MCF 10A (cell line): ENCODE measurements at regions of chr12 and their contacts with region 1.

Region 1: GRCh38 chr12:117850048-117850447 is 118.7 kb downstream of the KSR2 start:
- DNase-seq: peak; percentile 77
- H3K4me3 Mint-ChIP-seq: no peak overlapping the region
- H3K27ac Mint-ChIP-seq: no peak overlapping the region
- H3K4me1 Mint-ChIP-seq: peaks cover 4% of the 10 kb centered on the region
- H3K27me3 Mint-ChIP-seq: peaks cover 44% of the 10 kb centered on the region
- CTCF ChIP-seq: peak; percentile 77

Region 2: GRCh38 chr12:117025481-117026151 is 824.4 kb before region 1 on chr12:
- CTCF ChIA-PET with region 1: interaction called, 3 read pairs
- POLR2A ChIA-PET with region 1: no interaction called
- intact Hi-C with region 1: loop called (anchors 5 kb)
- DNase-seq: peak; percentile 70
- H3K4me3 Mint-ChIP-seq: no peak overlapping the region
- H3K27ac Mint-ChIP-seq: no peak overlapping the region
- H3K4me1 Mint-ChIP-seq: no peaks in the 10 kb centered on the region
- H3K27me3 Mint-ChIP-seq: no peaks in the 10 kb centered on the region
- CTCF ChIP-seq: peak; percentile 73

Region 3: DNA sequence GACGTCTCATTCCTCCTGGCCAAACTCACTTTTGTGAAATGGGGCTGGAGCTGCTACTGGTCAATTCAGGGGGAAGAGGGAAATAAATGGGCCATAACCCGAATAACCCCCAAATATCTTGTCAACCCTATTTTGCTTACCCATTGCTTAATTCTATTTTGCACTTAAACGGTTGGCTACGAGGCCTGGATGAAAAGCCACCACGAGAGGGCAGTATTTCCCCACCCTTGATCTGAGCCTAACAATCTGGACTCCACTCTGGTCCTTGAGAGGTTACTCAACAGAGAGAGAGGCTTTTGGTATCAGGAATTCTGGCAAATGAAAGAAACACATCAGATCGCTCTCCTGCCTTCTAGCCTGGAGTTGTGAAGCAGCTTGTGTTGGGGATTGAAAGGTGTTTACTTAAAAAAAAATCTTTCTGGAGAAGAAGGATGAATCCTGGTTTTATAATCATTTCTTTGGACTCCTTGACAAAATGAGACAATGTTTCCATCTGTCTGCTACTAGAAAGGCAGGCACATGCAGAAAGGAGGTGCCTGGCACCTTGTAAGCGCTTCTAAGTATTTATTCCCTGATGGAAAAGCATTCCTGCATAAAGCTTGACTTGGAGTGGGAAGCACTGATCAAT is 637.4 kb before region 1 on chr12:
- CTCF ChIA-PET with region 1: interaction called, 72 read pairs
- POLR2A ChIA-PET with region 1: no interaction called
- intact Hi-C with region 1: loop called (anchors 1 kb)
- DNase-seq: peak; percentile 86
- H3K4me3 Mint-ChIP-seq: no peak overlapping the region
- H3K27ac Mint-ChIP-seq: no peak overlapping the region
- H3K4me1 Mint-ChIP-seq: no peaks in the 10 kb centered on the region
- H3K27me3 Mint-ChIP-seq: peaks cover 70% of the 10 kb centered on the region
- CTCF ChIP-seq: peak; percentile 82

Region 4: GRCh38 chr12:117228239-117228638 is 621.8 kb before region 1 on chr12:
- CTCF ChIA-PET with region 1: interaction called, 30 read pairs
- POLR2A ChIA-PET with region 1: no interaction called
- intact Hi-C with region 1: no loop called
- DNase-seq: peak; percentile 54
- H3K4me3 Mint-ChIP-seq: no peak overlapping the region
- H3K27ac Mint-ChIP-seq: no peak overlapping the region
- H3K4me1 Mint-ChIP-seq: peaks cover 6% of the 10 kb centered on the region
- H3K27me3 Mint-ChIP-seq: peaks cover 15% of the 10 kb centered on the region
- CTCF ChIP-seq: no peak

Region 5: GRCh38 chr12:117255386-117255785 is 594.7 kb before region 1 on chr12:
- CTCF ChIA-PET with region 1: interaction called, 10 read pairs
- POLR2A ChIA-PET with region 1: no interaction called
- intact Hi-C with region 1: no loop called
- DNase-seq: no peak
- H3K4me3 Mint-ChIP-seq: no peak overlapping the region
- H3K27ac Mint-ChIP-seq: no peak overlapping the region
- H3K4me1 Mint-ChIP-seq: no peaks in the 10 kb centered on the region
- H3K27me3 Mint-ChIP-seq: no peaks in the 10 kb centered on the region
- CTCF ChIP-seq: no peak

Region 6: DNA sequence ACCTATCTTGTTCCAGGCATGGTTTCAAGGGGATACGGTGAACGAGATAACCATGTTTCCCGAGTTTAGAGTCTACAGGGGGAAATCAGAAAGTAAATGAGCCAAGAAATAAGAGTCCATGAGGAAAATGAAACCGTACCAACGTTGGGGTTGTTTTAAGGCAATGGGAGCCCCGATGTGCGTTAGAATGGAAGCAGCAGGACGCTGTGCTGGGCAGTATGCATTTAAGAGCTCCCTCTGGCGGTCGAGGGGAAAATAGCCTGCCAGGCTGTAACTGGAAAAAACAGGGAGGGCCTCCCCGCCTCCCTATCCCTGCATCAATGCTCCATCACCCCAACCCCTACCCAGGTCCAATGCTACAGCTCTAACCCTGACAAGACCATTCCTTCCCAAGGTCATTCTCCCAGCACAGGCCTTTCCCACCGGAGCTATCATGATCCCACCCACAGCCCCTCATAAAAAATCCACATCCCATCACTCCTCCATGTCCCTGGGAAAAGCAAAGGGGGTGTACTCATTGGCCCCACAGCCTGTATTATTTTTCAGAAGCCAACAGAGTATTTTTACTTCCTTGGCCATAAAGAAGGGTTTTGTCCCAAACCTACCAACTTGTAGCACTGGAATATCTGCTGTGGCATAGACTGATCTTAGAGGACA is 262.3 kb before region 1 on chr12:
- CTCF ChIA-PET with region 1: interaction called, 10 read pairs
- POLR2A ChIA-PET with region 1: no interaction called
- intact Hi-C with region 1: no loop called
- DNase-seq: peak; percentile 65
- H3K4me3 Mint-ChIP-seq: no peak overlapping the region
- H3K27ac Mint-ChIP-seq: no peak overlapping the region
- H3K4me1 Mint-ChIP-seq: no peaks in the 10 kb centered on the region
- H3K27me3 Mint-ChIP-seq: peaks cover 21% of the 10 kb centered on the region
- CTCF ChIP-seq: peak; percentile 78

Region 7: DNA sequence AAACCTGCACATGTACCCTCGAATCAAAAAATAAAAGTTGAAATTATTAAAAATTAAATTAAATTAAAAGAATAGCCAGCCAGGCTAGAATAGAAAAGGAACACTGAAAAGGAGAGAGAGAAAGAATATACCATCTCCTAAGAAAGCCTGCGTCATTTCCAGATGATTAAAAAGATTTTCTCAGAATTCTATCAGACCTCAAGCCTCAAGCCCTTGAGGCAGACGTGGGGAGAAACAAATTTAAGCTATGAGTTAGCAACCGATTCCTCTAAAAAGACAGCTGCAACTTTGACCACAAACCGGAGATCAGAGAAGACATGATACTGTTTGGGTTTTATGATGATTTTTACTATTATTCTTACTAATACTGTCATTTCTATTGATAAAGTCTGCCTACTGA is 19.6 kb before region 1 on chr12:
- CTCF ChIA-PET with region 1: interaction called, 11 read pairs
- POLR2A ChIA-PET with region 1: no interaction called
- intact Hi-C with region 1: no loop called
- DNase-seq: no peak
- H3K4me3 Mint-ChIP-seq: no peak overlapping the region
- H3K27ac Mint-ChIP-seq: no peak overlapping the region
- H3K4me1 Mint-ChIP-seq: no peaks in the 10 kb centered on the region
- H3K27me3 Mint-ChIP-seq: peaks cover 10% of the 10 kb centered on the region
- CTCF ChIP-seq: no peak